ENCODE measurements at regions of chr15 and their contacts with region 1.

Region 1: GRCh38 chr15:41989934-41990605 is 17.7 kb upstream of the EHD4 start:
- DNase-seq: peak; percentile 68

Region 2: DNA sequence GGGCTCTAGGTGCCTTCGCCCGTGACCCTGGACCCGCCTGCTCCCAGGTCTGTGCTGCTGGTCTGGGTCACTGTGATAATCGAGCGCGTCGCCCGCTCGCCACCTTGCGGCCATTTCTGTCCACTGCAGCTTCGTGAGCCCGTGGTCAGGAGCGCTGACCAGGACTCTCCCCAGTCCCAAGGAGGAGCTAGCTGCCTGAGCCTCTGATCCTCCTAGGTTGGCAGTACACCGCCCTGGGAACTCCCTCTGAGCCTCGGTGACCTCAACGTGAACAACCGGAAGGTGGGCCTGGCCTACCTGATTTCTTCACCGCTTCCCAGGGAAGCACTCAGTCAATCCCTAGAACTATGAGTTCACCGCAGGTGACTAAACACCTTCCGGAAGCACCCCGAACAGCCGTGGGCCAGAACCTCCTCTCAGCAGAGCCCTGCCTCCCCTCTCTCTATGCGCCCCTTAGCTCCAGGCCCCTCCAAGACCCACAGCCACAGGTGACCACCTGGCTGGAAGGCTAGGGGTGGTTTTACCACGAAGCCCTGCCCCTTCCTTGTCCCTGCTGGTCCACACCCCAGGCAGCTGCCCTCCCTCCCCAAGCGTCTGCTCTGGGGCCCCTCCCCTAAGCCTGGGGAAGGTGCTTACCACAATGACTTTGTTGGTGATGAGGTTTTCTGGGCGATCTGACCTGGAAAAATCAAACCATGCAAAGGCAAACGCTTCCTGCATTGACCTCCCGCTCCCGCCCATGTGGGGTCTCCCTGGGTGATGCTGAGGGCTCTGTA is 94.6 kb after region 1 on chr15:
- intact Hi-C with region 1: loop called in 1 of 2 experiments (anchors 10 kb)
- DNase-seq: peak; percentile 92

Region 3: GRCh38 chr15:42137431-42138261 is 147.6 kb after region 1 on chr15:
- intact Hi-C with region 1: loop called (anchors 10 kb)
- DNase-seq: peak; percentile 70

Region 4: GRCh38 chr15:43808960-43809678 is 1819.0 kb after region 1 on chr15:
- intact Hi-C with region 1: no loop called
- DNase-seq: no peak